Left cardiac atrium (tissue), 4 donors: ENCODE measurements at regions of chr5 and their contacts with region 1.

Region 1: DNA sequence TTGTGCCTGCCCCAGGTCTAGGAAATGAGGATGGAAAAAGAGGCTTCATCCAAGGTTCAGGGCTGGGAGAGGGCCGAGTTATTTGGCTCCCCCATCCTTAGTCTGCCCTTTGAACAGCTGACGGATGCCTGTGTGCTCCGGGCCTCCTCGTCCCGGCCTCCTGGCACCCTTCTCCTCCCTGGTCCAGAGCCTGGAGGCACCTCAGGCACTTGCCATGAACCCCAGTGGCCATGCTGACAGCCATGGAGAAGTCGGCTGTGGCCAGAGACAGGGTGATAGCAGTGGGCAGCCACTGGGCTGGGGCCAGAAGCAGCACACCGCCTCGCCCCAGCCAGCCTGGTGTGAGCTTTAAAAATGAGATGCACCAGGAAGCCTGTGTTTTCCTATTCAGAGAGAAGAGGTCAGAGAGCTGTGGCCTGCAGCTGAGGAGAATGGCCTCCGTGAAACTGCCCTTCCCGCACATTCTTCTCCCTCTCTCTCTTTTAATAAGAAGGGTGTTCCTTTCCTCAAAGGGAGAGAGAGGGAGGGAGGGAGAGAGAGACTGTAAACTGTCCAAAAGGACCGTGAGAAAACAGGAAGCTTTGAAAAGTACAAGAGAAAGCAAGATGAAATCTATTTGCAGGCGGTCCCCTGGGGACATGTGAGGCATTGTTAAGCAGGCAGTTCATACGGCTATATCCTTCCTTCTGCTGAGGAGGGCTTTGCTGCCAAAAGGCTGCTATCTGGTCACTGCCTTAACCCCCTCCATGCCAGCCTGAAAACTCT is 55.3 kb downstream of the ZNF366 start:
- DNase-seq: peak; percentile 85
- ATAC-seq: peak; percentile 71 to 82

Region 2: DNA sequence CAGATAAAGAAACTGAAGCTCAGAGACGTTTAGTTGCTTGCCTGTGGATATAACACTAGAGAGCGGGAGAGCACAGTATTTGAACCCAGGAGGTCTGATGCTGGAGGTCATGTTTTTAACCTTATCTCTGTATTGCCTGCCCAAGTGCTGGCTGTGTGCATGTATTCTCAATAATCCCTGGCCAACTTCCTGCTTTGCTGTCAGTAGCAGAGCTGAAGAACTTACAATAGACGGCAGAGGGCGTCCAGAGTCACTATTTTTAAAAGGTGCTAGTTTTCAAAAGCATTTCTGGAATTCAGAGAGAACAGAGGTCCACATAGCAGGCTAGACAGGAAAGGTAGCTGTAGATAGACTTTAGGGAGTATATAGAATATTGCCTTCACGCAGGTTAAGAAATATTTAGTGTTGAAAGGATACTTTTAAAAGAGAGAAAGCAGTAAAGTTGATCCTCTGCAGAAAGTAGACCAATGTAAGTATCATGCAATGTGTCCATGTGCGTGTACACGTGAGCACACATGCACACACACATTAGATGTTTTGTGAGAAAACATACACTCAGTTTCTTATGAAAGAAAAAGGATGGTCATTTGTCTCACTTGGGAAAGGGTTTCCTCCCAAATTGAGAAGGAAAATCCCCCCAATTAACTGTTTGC is 85.5 kb before region 1 on chr5:
- intact Hi-C with region 1: loop called in 1 of 2 experiments (anchors 5 kb)
- DNase-seq: peak; percentile 71
- ATAC-seq: peak; percentile 87 to 91

Region 3: GRCh38 chr5:72507909-72508575 is 56.1 kb after region 1 on chr5:
- intact Hi-C with region 1: loop called (anchors 10 kb)
- DNase-seq: no peak
- ATAC-seq: no peak